Heart right ventricle (tissue), 16 donors: ENCODE measurements at regions of chr16 and their contacts with region 1.

Region 1: DNA sequence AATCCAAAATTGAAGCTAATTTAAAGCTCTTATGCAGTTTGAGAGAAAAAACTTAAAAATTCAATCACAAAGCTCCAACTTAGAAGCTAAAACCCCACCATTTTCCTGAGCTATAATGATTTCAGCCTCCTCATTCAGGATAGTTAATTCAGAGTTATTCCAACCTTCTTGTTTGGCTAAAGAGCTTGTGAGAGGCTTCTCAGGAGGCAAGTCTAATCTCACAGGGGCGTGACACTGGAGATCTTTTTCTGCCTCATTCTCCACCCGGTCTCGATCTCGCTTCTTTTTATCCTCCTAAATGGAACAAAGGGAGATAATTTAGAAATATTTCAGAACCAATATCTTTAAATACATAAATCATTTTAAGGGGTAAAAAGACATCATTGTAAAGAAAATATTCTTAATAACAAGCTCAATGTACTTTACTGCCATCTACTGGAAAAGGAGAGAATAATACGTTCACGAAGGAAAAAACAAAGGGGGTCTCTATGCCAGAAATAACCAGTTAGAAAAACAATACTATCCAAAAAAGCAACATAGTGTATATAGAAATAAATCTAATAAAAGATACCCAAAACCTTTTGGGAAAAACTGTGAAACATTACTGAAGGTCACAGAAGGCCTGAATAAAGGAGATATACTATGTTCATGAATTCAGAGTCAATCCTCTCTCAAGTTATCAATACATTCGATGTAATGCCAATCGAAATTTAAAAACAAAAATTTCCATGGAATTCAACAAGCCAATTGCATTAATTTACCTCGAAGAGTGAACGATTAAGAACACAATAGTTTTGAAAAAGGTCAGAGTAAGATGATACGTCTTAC is 13.9 kb downstream of the BRD7 start:
- DNase-seq: no peak
- ATAC-seq: no peak
- H3K4me3 ChIP-seq: no peak overlapping the region
- H3K27ac ChIP-seq: no peak overlapping the region
- H3K4me1 ChIP-seq: peaks cover 0 to 6% (median 0%) of the 10 kb centered on the region in 9 donors
- H3K27me3 ChIP-seq: no peaks in the 10 kb centered on the region
- CTCF ChIP-seq: peak; percentile 11 to 76 (median 64)

Region 2: GRCh38 chr16:50210266-50211038 is 144.4 kb before region 1 on chr16:
- intact Hi-C with region 1: loop called in 5 of 10 experiments (anchors 10 kb)
- DNase-seq: peak; percentile 72 to 82
- ATAC-seq: peak; percentile 86 to 95 (median 92)
- H3K4me3 ChIP-seq: no peak overlapping the region
- H3K27ac ChIP-seq: peak overlapping the region in 2 of 10 donors; percentile 9 to 39
- H3K4me1 ChIP-seq: peaks cover 7 to 51% (median 33%) of the 10 kb centered on the region in 9 donors
- H3K27me3 ChIP-seq: no peaks in the 10 kb centered on the region
- CTCF ChIP-seq: peak; percentile 41 to 90 (median 74)

Region 3: DNA sequence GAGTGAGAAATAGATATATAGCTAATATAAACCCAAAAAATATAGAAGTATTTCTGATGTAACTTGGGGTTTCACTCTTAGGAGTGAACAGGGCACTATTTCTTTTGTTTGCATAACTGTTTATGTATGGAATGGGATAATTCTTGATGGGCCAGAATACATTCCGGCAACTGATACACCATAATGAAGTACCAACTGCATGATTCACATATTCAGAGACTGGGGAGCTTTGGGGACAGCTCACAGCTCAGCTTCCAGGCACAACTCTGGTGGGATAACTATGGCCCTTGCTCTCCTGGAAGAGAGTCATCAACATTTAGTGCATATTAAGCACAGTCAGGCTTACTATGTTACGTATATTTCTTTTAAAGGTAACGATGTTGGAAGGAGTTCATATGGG is 130.6 kb before region 1 on chr16:
- intact Hi-C with region 1: loop called in 6 of 10 experiments (anchors 5 to 10 kb)
- DNase-seq: no peak
- ATAC-seq: no peak
- H3K4me3 ChIP-seq: no peak overlapping the region
- H3K27ac ChIP-seq: no peak overlapping the region
- H3K4me1 ChIP-seq: no peaks in the 10 kb centered on the region
- H3K27me3 ChIP-seq: no peaks in the 10 kb centered on the region
- CTCF ChIP-seq: no peak

Region 4: GRCh38 chr16:50235581-50235980 is 119.3 kb before region 1 on chr16:
- intact Hi-C with region 1: loop called in 1 of 10 experiments (anchors 10 kb)
- DNase-seq: no peak
- ATAC-seq: no peak
- H3K4me3 ChIP-seq: no peak overlapping the region
- H3K27ac ChIP-seq: no peak overlapping the region
- H3K4me1 ChIP-seq: no peaks in the 10 kb centered on the region
- H3K27me3 ChIP-seq: peaks cover 0 to 9% (median 0%) of the 10 kb centered on the region in 7 donors
- CTCF ChIP-seq: no peak